ENCODE measurements at regions of chr11 and their contacts with region 1.

Region 1: DNA sequence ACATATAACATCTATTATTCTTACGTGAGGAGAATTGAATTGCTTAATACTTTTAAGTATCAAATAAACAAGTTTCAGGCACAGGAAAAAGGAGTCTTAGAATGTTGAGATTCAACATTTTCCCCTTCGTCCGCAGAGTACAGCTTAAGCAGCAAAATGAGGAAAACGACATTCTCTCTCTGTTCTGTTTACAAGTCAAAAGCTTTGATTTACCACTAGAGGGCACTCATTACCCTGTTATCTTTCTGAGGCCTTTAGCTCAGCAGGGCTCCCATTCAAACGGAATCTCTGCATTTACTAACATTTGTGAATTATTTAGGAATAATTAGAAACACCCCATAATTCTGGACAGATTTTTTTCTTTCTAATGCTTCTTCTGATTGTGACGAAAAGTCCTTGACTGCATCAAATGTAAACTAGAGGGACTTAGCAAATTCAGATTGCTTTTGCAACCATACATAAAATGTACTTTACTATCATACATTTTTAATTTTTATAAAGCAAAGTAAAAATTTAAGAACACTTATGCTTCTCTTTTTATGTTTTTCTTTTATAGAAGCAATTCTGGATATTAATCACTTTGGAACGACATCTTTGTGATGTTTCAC is 75.0 kb downstream of the JRKL start:
- DNase-seq: no peak
- ATAC-seq: peak in 3 of 4 donors; percentile 74 to 94 (median 85)
- H3K4me3 ChIP-seq: no peak overlapping the region
- H3K27ac ChIP-seq: no peak overlapping the region
- H3K4me1 ChIP-seq: no peaks in the 10 kb centered on the region
- H3K27me3 ChIP-seq: no peaks in the 10 kb centered on the region
- CTCF ChIP-seq: peak; percentile 74

Region 2: GRCh38 chr11:97140885-97141494 is 676.2 kb after region 1 on chr11:
- intact Hi-C with region 1: loop called in 1 of 2 experiments (anchors 10 kb)
- DNase-seq: no peak
- ATAC-seq: no peak
- H3K4me3 ChIP-seq: no peak overlapping the region
- H3K27ac ChIP-seq: no peak overlapping the region
- H3K4me1 ChIP-seq: no peaks in the 10 kb centered on the region
- H3K27me3 ChIP-seq: no peaks in the 10 kb centered on the region
- CTCF ChIP-seq: peak; percentile 4

Measured in psoas muscle (tissue), 8 donors.